ENCODE measurements at regions of chr22 and their contacts with region 1.

Region 1: DNA sequence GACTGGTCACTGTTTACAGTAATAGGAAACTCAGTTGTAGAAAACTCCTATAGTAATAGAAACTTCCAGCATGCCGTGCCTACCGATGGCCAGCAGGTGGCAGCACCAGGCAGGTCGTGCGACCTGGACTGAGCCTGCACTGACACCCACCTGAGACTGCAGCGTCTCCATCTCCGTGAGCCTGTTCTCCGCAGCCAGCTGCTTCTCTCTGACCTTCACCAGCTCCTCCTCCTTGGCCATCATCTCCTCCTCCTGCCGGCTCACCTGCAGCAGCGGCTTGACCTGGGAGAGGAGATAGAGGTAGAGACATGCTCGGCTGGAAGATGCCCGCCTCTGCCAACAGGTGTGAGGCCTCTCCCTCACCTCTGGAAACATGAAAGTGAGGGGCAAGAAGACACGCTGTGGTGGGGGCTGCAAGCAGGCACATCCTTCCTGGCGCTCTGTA is 48.5 kb downstream of the APOL1 start:
- DNase-seq: peak; percentile 87
- ATAC-seq: peak; percentile 84
- H3K4me3 Mint-ChIP-seq: no peak overlapping the region
- H3K27ac Mint-ChIP-seq: peak overlapping the region; percentile 29
- H3K4me1 Mint-ChIP-seq: peaks cover 12% of the 10 kb centered on the region
- H3K27me3 Mint-ChIP-seq: no peaks in the 10 kb centered on the region

Region 2: GRCh38 chr22:36227386-36227785 is 74.0 kb before region 1 on chr22:
- CTCF ChIA-PET with region 1: no interaction called
- POLR2A ChIA-PET with region 1: no interaction called
- DNase-seq: peak; percentile 57
- ATAC-seq: peak; percentile 51
- H3K4me3 Mint-ChIP-seq: no peak overlapping the region
- H3K27ac Mint-ChIP-seq: peak overlapping the region; percentile 66
- H3K4me1 Mint-ChIP-seq: peaks cover 16% of the 10 kb centered on the region
- H3K27me3 Mint-ChIP-seq: no peaks in the 10 kb centered on the region

Region 3: DNA sequence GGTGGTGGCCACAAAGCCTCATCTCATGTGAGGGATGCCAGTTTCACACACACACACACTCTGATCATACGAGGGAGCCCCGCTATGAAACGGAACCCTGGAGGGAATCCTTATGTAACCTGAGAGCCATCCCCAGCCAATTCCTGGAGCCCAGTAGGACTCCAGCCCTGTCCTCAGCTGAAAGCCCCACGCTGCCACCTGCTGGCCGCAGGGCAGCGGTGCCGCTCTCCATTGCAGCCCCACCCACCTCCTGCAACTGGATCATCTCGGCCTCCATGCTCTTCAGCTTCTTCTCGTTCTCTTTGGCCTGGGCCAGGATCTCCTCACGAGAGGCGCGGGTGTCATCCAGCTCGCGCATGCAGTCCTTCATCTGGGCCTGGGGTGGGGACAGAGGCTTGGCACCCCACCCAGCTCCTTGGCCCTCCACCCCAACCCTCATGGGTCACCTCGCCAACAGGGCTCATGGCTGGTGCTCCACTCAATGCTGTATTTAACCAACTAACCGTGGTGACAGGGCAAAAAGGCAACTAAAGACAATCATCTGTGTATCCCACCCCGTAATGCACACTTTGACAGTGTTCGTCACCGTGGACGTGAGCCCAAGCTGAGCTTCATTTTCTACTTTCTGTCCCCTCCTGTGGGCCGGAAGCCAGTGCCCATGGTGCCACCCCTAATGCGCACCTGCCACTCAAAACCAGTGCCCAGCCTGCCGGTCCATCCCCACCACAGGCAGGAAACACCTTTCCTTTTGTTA is 14.8 kb before region 1 on chr22:
- CTCF ChIA-PET with region 1: interaction called, 17 read pairs
- POLR2A ChIA-PET with region 1: no interaction called
- DNase-seq: peak; percentile 73
- ATAC-seq: peak; percentile 69
- H3K4me3 Mint-ChIP-seq: no peak overlapping the region
- H3K27ac Mint-ChIP-seq: peak overlapping the region; percentile 45
- H3K4me1 Mint-ChIP-seq: peaks cover 45% of the 10 kb centered on the region
- H3K27me3 Mint-ChIP-seq: no peaks in the 10 kb centered on the region

Region 4: DNA sequence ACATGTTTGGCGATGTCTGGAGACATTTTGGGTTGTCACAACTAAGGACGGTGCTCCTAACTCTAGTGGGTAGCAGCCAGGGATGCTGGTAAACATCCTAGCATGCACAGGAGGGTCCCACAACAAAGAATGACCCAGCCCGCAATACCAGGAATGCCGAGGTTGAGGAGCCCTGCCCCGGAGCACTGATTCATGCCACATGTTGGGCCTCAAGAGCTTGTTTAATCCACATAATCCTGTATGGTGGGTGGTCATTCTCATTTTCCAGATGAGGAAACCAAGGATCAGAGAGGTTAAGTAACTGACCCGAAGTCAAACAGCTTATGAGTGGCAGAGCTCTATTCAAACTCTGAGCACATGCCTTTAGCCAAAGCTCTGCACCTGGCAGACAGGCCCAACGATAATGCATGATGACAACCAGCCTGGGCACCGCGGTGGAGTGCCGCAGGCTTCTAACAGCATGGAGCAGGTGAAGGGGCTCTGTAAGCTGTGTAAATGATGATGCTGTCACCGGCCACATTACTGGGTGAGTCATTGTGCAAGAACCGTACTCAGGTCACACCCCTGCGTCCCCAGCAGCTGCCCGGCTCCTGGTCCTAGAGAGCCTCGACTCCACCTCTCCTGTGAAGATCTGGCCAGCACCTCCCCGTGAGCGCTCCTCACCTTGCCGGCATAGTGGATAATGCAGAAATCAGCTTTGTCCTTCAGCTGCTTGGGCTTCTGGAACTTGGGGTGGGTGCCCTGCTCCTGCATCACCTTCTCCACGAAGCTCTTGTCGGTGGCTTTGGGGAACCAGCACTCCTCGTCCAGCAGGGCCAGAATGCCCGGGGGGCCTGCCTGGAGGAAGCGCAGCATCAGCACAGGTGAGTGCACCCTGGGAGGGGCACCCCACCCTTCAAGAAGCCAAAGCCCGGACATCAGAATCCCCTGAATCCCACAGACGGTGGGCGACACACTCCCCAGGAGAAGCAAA is 10.3 kb after region 1 on chr22:
- CTCF ChIA-PET with region 1: interaction called, 16 read pairs
- POLR2A ChIA-PET with region 1: interaction called, 3 read pairs
- DNase-seq: no peak
- ATAC-seq: no peak
- H3K4me3 Mint-ChIP-seq: no peak overlapping the region
- H3K27ac Mint-ChIP-seq: peak overlapping the region; percentile 43
- H3K4me1 Mint-ChIP-seq: peaks cover 5% of the 10 kb centered on the region
- H3K27me3 Mint-ChIP-seq: no peaks in the 10 kb centered on the region

Region 5: DNA sequence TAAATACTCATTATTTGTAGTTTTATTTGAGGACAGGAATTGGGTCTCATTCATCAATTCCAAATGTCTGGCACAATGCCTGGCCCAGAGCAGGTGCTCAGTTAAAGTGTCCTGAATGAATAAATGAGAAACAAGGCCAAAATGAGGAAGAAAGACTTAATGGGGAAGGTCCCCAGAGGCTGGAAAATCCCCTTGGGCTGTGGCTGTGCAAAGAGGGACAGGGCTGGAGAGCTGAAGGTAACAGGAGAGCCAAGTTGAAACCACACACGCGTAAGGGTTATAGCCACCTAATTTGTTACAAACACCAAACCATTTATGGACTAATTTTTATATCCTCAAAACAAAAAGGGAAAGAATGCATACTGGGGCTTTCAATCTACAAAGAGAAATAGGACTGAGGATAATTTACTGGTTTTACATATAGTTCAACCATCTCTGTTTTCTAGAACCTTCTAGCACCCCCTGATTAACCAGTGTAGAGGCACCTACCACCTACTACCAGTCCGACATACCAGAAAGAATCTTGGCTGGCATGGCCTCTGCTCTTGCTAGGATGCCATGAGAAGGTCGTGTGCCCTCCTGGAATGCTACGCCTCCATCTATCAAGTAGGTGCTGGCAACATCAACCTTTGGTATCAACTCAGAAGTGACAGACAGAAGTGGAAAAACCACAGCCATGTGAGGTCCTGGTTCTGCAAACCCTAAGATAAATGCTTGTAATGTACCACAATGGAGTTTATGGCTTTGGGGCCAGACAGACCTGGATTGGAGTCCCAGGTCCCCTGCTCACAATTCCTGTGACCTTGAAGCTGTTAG is 58.0 kb after region 1 on chr22:
- CTCF ChIA-PET with region 1: interaction called, 15 read pairs
- POLR2A ChIA-PET with region 1: no interaction called
- DNase-seq: no peak
- ATAC-seq: no peak
- H3K4me3 Mint-ChIP-seq: peak overlapping the region; percentile 13
- H3K27ac Mint-ChIP-seq: peak overlapping the region; percentile 74
- H3K4me1 Mint-ChIP-seq: peaks cover 94% of the 10 kb centered on the region
- H3K27me3 Mint-ChIP-seq: no peaks in the 10 kb centered on the region

Region 6: GRCh38 chr22:36405671-36406538 is 104.5 kb after region 1 on chr22:
- CTCF ChIA-PET with region 1: interaction called, 11 read pairs
- POLR2A ChIA-PET with region 1: no interaction called
- DNase-seq: peak; percentile 77
- ATAC-seq: peak; percentile 72
- H3K4me3 Mint-ChIP-seq: peak overlapping the region; percentile 40
- H3K27ac Mint-ChIP-seq: peak overlapping the region; percentile 93
- H3K4me1 Mint-ChIP-seq: peaks cover 51% of the 10 kb centered on the region
- H3K27me3 Mint-ChIP-seq: no peaks in the 10 kb centered on the region

Region 7: GRCh38 chr22:36486619-36487384 is 185.4 kb after region 1 on chr22:
- CTCF ChIA-PET with region 1: interaction called, 23 read pairs
- POLR2A ChIA-PET with region 1: no interaction called
- DNase-seq: peak; percentile 72
- ATAC-seq: no peak
- H3K4me3 Mint-ChIP-seq: no peak overlapping the region
- H3K27ac Mint-ChIP-seq: no peak overlapping the region
- H3K4me1 Mint-ChIP-seq: peaks cover 8% of the 10 kb centered on the region
- H3K27me3 Mint-ChIP-seq: no peaks in the 10 kb centered on the region

Measured in activated CD8-positive, alpha-beta T cell treated with anti-CD3 and anti-CD28 coated beads, Interleukin-2, amount 10 ng/mL, durations not matched to agents 7 days and 5 days (primary cell).